ENCODE measurements at regions of chr10 and their contacts with region 1.

Region 1: DNA sequence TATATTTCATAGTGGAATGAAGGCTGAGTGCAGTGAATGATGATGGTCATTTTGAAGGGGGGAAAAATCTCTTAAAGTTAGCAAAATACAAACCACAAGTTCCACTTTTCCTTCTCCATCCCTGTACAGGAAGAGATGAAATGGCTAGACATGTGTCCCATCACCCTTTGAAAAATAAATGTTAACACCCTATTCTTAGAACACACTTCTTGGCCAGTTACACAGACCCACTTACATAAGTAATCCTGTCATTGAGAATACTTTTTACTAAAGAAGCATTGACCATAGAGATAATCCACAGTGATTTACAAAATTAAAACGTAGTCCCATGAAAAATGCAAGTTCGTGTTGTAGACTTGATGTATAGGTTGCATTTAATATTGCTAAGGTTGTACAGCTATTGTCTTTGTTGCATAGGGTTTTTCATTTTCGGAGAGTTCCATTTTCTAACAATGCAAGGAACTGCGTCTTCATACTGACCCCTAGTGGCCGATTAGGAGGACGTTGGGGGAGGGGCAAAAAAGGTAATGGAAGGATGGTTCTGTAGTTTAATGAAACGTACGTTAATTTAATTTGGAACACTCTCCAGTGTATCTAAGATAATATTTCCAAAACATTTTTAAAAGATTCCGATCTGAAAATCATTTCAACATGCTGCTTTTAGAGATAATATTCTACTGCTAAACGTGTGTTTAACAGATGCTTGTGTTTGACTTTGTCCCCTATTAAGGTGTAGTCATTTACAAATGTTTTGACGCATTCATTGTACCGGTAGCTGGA is 60.9 kb downstream of the ARMC3 start:
- DNase-seq: peak; percentile 76
- H3K4me3 Mint-ChIP-seq: no peak overlapping the region
- H3K27ac Mint-ChIP-seq: no peak overlapping the region
- H3K4me1 Mint-ChIP-seq: no peaks in the 10 kb centered on the region
- H3K27me3 Mint-ChIP-seq: peaks cover 22% of the 10 kb centered on the region
- CTCF ChIP-seq: peak; percentile 77

Region 2: GRCh38 chr10:21989453-21990154 is 999.2 kb before region 1 on chr10:
- CTCF ChIA-PET with region 1: no interaction called
- intact Hi-C with region 1: loop called (anchors 5 kb)
- DNase-seq: peak; percentile 41
- H3K4me3 Mint-ChIP-seq: no peak overlapping the region
- H3K27ac Mint-ChIP-seq: no peak overlapping the region
- H3K4me1 Mint-ChIP-seq: no peaks in the 10 kb centered on the region
- H3K27me3 Mint-ChIP-seq: no peaks in the 10 kb centered on the region
- CTCF ChIP-seq: peak; percentile 41

Region 3: GRCh38 chr10:22244001-22244400 is 744.8 kb before region 1 on chr10:
- CTCF ChIA-PET with region 1: no interaction called
- intact Hi-C with region 1: loop called (anchors 10 kb)
- DNase-seq: peak; percentile 11
- H3K4me3 Mint-ChIP-seq: no peak overlapping the region
- H3K27ac Mint-ChIP-seq: no peak overlapping the region
- H3K4me1 Mint-ChIP-seq: peaks cover 23% of the 10 kb centered on the region
- H3K27me3 Mint-ChIP-seq: no peaks in the 10 kb centered on the region
- CTCF ChIP-seq: no peak

Region 4: DNA sequence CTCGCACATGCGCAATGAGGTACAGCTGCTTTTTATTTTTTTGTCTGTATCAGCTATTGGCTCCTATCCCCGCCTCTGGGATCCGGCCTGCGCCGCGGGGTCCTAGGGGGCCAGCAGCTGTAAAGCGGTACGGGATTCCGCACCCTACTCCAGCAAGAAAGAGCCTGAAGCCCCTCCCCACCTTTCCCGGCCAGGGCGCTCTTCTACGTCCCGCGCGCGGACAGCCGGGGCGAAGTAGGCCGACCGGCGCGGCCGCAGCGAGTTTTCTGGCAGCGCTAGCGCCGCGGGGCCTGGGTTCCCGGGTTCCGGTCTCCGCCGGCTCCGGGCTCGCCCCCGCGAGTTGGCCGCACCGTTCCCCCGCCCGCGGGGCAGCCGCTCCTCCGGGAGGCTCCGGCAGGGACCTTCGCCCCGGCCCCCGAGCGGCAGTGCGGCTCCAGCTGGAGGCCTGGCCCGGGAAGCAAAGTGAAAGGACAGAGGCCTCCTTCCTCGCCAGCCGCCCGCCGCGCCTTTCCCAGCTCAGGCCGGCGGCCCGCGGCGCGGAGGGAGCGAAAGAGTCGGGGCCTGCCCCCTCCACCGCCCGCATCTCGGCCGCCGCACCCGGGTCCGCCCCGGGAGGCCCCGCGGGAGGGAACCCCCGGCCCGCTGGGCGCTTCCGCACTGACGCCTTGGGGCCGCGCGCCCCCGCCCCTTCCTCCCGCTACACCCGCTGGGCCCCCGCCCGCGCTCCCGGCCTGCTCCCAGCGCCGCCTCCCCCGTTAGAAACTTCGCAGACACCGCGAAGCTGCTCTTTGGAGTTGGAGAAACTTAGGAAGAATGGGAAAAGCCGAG is 648.2 kb before region 1 on chr10:
- CTCF ChIA-PET with region 1: interaction called, 3 read pairs
- intact Hi-C with region 1: loop called (anchors 5 kb)
- DNase-seq: peak; percentile 61
- H3K4me3 Mint-ChIP-seq: peak overlapping the region; percentile 77
- H3K27ac Mint-ChIP-seq: peak overlapping the region; percentile 47
- H3K4me1 Mint-ChIP-seq: no peaks in the 10 kb centered on the region
- H3K27me3 Mint-ChIP-seq: peaks cover 54% of the 10 kb centered on the region
- CTCF ChIP-seq: no peak

Region 5: GRCh38 chr10:22550732-22551131 is 438.0 kb before region 1 on chr10:
- CTCF ChIA-PET with region 1: no interaction called
- intact Hi-C with region 1: loop called (anchors 5 kb)
- DNase-seq: peak; percentile 61
- H3K4me3 Mint-ChIP-seq: no peak overlapping the region
- H3K27ac Mint-ChIP-seq: no peak overlapping the region
- H3K4me1 Mint-ChIP-seq: no peaks in the 10 kb centered on the region
- H3K27me3 Mint-ChIP-seq: no peaks in the 10 kb centered on the region
- CTCF ChIP-seq: peak; percentile 78

Region 6: DNA sequence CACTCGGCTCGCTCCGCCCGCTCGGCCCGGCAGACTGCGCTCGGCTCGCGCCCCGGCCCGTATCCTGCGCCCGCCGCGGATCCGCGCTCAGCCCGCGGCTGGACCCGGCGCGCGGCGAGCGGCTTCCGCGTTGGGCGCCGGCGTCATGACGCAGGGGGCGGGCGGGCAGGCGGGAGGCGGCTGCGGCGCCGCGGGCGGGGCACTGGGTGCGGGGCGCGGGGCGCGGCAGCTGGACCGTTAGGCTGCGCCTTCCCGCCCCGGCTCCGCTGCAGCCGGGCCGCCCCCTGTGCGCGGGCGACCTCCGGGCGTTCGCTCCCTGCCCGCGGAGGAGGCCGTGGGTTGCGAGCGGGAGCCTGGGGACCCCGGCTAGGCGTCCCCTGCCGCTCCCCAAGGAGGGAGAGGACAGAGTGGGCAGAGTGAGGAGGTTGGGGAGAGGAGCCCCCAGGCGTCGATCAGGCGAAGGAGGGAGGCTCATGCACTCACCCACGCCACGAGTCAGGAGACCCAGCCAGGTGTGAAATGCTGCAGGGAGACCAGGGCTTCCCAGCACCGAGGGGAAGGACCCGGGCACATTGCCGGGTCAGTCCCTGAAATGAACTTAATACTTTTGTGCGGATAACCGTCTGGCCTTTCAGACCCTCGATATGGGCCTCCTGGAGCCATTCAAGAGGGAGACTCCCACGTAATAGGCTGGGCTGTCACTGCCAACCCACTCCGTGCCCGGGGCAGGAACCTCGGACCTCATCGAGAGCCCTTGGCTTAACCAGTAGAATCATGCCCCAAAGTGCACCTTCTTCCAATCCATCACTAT is 274.1 kb before region 1 on chr10 and contains the start of gene PIP4K2A:
- CTCF ChIA-PET with region 1: no interaction called
- intact Hi-C with region 1: loop called (anchors 10 kb)
- DNase-seq: peak; percentile 78
- H3K4me3 Mint-ChIP-seq: peak within 1 kb of the TSS; percentile 76
- H3K27ac Mint-ChIP-seq: peak within 1 kb of the TSS; percentile 21
- H3K4me1 Mint-ChIP-seq: peaks cover 18% of the 10 kb centered on the region
- H3K27me3 Mint-ChIP-seq: no peaks in the 10 kb centered on the region
- CTCF ChIP-seq: no peak
- total RNA-seq, gene PIP4K2A: 22.7 and 24.2 TPM in 2 replicates